MCF 10A (cell line): ENCODE measurements at regions of chr5 and their contacts with region 1.

Region 1: GRCh38 chr5:42057254-42057690 is 132.2 kb downstream of the FBXO4 start:
- DNase-seq: peak; percentile 67
- H3K4me3 Mint-ChIP-seq: no peak overlapping the region
- H3K27ac Mint-ChIP-seq: no peak overlapping the region
- H3K4me1 Mint-ChIP-seq: no peaks in the 10 kb centered on the region
- H3K27me3 Mint-ChIP-seq: no peaks in the 10 kb centered on the region
- CTCF ChIP-seq: peak; percentile 76

Region 2: DNA sequence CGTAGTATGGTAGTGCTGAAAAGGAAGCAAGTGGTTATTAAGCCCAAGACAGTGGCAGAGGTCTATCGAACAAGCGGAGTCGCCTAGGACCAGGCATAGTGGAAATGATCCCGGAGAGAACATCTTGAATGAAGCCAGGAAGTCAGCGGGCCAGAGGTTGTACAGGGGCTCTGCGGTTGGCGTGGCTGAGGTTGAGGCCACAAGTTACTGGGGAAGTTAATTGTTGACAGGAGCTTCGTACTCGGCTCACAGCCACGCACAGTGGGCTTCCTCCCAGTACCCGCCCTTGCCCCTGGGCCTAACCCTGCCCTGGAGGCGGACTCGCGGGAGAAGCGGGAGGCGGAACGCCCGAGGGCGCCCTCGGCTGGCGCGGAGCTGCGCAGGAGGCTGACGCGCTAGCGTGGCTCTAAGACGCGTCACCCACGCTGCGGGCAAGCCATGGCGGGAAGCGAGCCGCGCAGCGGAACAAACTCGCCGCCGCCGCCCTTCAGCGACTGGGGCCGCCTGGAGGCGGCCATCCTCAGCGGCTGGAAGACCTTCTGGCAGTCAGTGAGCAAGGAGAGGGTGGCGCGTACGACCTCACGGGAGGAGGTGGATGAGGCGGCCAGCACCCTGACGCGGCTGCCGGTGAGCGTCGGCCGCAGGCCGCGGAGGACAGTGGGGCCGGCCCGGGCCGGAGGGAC is 132.3 kb before region 1 on chr5 and contains the start of gene FBXO4:
- CTCF ChIA-PET with region 1: interaction called, 16 read pairs
- POLR2A ChIA-PET with region 1: no interaction called
- intact Hi-C with region 1: no loop called
- DNase-seq: peak; percentile 69
- H3K4me3 Mint-ChIP-seq: peak within 1 kb of the TSS; percentile 68
- H3K27ac Mint-ChIP-seq: peak within 1 kb of the TSS; percentile 86
- H3K4me1 Mint-ChIP-seq: no peaks in the 10 kb centered on the region
- H3K27me3 Mint-ChIP-seq: no peaks in the 10 kb centered on the region
- CTCF ChIP-seq: peak; percentile 23
- total RNA-seq, gene FBXO4: 18.4 and 20.2 TPM in 2 replicates

Region 3: GRCh38 chr5:42005561-42006153 is 51.6 kb before region 1 on chr5:
- CTCF ChIA-PET with region 1: interaction called, 20 read pairs
- POLR2A ChIA-PET with region 1: no interaction called
- intact Hi-C with region 1: loop called (anchors 1 kb)
- DNase-seq: peak; percentile 33
- H3K4me3 Mint-ChIP-seq: no peak overlapping the region
- H3K27ac Mint-ChIP-seq: no peak overlapping the region
- H3K4me1 Mint-ChIP-seq: no peaks in the 10 kb centered on the region
- H3K27me3 Mint-ChIP-seq: no peaks in the 10 kb centered on the region
- CTCF ChIP-seq: peak; percentile 69

Region 4: GRCh38 chr5:42037379-42037932 is 19.8 kb before region 1 on chr5:
- CTCF ChIA-PET with region 1: interaction called, 19 read pairs
- POLR2A ChIA-PET with region 1: interaction called, 3 read pairs
- intact Hi-C with region 1: no loop called
- DNase-seq: no peak
- H3K4me3 Mint-ChIP-seq: no peak overlapping the region
- H3K27ac Mint-ChIP-seq: no peak overlapping the region
- H3K4me1 Mint-ChIP-seq: no peaks in the 10 kb centered on the region
- H3K27me3 Mint-ChIP-seq: no peaks in the 10 kb centered on the region
- CTCF ChIP-seq: no peak